Right ventricle myocardium inferior (tissue), 1 donor: ENCODE measurements at regions of chr14 and their contacts with region 1.

Region 1: GRCh38 chr14:51283402-51284085 is 43.5 kb downstream of the TMX1 start:
- DNase-seq: no peak
- ATAC-seq: peak; percentile 88

Region 2: GRCh38 chr14:51780006-51780692 is 496.6 kb after region 1 on chr14:
- intact Hi-C with region 1: loop called (anchors 1 kb)
- DNase-seq: peak; percentile 75
- ATAC-seq: peak; percentile 53